ENCODE measurements at regions of chr17 and their contacts with region 1.

Region 1: GRCh38 chr17:17710728-17711541 is 29.7 kb downstream of the RAI1 start:
- DNase-seq: peak; percentile 89
- H3K4me3 Mint-ChIP-seq: no peak overlapping the region
- H3K27ac Mint-ChIP-seq: peak overlapping the region; percentile 77
- H3K4me1 Mint-ChIP-seq: peaks cover 46% of the 10 kb centered on the region
- H3K27me3 Mint-ChIP-seq: no peaks in the 10 kb centered on the region
- CTCF ChIP-seq: no peak

Region 2: DNA sequence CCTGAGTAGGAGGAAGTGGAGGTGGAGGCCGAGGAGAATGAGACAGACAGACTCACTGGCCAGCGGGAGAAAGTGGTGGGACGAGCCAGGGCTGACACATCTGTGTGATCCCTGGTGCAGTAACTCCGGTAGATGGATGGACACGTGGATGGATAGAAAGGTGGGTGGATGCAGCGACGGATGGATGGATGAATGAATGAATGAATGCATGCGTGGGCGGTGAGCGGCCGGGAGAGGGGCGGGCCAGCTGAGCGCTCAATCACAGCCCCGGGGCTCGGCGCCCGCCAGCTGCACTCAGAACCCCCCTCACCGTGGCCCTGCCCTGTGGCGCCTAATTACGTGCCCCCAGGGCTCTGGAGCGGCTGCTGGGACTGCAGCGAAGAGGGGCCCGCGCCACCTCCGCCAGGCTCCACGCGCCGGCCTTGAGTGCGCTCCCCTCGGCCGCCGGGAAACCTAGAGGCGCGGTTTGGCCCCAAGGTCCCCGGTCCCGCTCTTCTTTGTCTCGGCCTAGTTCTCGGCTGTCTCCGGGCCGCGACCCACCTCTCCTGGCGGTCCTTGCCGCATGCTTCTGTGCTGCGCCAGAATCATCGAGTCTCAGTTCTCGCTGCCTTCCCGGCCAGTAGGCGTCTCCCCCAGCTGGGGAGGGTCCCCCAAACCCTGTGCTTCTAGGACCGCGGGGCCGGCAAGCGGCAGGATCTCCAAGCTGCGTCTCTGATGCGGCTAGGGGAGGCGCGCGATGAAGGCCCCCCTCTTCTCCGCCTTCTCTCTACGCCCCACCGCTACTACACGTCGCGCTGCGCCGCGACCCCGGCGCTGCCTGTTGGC is 11.4 kb after region 1 on chr17:
- CTCF ChIA-PET with region 1: no interaction called
- intact Hi-C with region 1: no loop called
- DNase-seq: no peak
- H3K4me3 Mint-ChIP-seq: no peak overlapping the region
- H3K27ac Mint-ChIP-seq: no peak overlapping the region
- H3K4me1 Mint-ChIP-seq: peaks cover 49% of the 10 kb centered on the region
- H3K27me3 Mint-ChIP-seq: no peaks in the 10 kb centered on the region
- CTCF ChIP-seq: no peak

Region 3: GRCh38 chr17:17766077-17766743 is 55.3 kb after region 1 on chr17:
- CTCF ChIA-PET with region 1: interaction called, 12 read pairs
- intact Hi-C with region 1: no loop called
- DNase-seq: no peak
- H3K4me3 Mint-ChIP-seq: no peak overlapping the region
- H3K27ac Mint-ChIP-seq: no peak overlapping the region
- H3K4me1 Mint-ChIP-seq: no peaks in the 10 kb centered on the region
- H3K27me3 Mint-ChIP-seq: no peaks in the 10 kb centered on the region
- CTCF ChIP-seq: no peak

Region 4: DNA sequence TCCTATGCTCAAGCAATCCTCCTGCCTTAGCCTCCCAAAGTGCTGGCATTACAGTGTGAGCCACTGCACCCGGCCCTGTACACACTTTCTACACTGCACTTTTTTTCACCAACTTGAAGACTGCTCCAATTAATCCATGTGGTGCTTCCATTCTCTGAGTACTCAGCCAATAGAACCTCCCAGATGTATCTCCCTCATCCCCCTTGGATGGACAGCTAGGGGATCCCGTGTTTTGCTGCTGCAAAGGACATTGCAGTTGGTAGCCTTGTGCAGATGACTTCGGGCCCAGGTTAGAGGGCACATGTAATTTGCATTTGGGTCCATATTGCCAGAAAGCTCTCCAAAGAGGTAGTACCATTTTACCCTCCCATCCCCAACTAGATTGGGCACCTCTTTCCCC is 66.0 kb after region 1 on chr17:
- CTCF ChIA-PET with region 1: no interaction called
- intact Hi-C with region 1: no loop called
- DNase-seq: no peak
- H3K4me3 Mint-ChIP-seq: no peak overlapping the region
- H3K27ac Mint-ChIP-seq: no peak overlapping the region
- H3K4me1 Mint-ChIP-seq: peaks cover 20% of the 10 kb centered on the region
- H3K27me3 Mint-ChIP-seq: no peaks in the 10 kb centered on the region
- CTCF ChIP-seq: no peak